Posterior vena cava (tissue), 2 donors: ENCODE measurements at regions of chr10 and their contacts with region 1.

Region 1: DNA sequence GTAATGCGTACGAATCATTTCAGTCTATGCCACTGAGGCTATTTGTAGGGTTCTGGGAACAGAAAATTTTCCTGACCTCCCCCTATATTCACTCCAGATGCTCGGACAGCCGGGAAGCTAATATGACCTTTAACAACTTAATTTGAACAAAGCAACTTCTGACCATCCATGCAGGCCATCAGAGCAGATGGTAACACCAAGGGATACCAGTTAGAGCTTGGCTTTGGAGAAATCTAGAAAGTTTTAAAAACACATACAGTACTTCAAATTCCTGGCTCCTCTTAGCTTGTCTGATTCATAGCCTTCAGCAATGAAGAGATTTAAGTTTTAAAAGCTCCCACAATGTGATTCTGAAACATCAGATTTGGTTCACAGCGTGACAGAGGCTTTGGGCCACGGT is 257.3 kb downstream of the GPAM start:
- DNase-seq: no peak

Region 2: GRCh38 chr10:110918643-110919363 is 1007.5 kb before region 1 on chr10 and contains the start of gene BBIP1:
- intact Hi-C with region 1: loop called in 1 of 2 experiments (anchors 5 kb)
- DNase-seq: no peak
- total RNA-seq, gene BBIP1: 36.3 to 38.6 TPM

Region 3: GRCh38 chr10:112446855-112447711 is 520.8 kb after region 1 on chr10 and contains the starts of genes VTI1A and ZDHHC6:
- intact Hi-C with region 1: no loop called
- DNase-seq: peak; percentile 95
- total RNA-seq, gene VTI1A: 32.3 to 35.5 TPM
- total RNA-seq, gene ZDHHC6: 19.0 to 25.0 TPM